ENCODE measurements at regions of chr11 and their contacts with region 1.

Region 1: GRCh38 chr11:124800226-124800929 is at the start of gene MSANTD2:
- DNase-seq: peak; percentile 84 to 92
- H3K4me3 ChIP-seq: peak within 1 kb of the TSS; percentile 96
- H3K4me3 Mint-ChIP-seq: peak within 1 kb of the TSS; percentile 81
- H3K27ac Mint-ChIP-seq: peak within 1 kb of the TSS; percentile 65
- H3K4me1 ChIP-seq: peaks cover 17% of the 10 kb centered on the region
- H3K4me1 Mint-ChIP-seq: peaks cover 25% of the 10 kb centered on the region
- H3K27me3 ChIP-seq: no peaks in the 10 kb centered on the region
- H3K27me3 Mint-ChIP-seq: no peaks in the 10 kb centered on the region
- CTCF ChIP-seq: no peak
- total RNA-seq, gene MSANTD2: 28.3 and 33.2 TPM in 2 replicates

Region 2: GRCh38 chr11:124622531-124623451 is 177.6 kb before region 1 on chr11 and contains the start of gene TBRG1:
- CTCF ChIA-PET with region 1: no interaction called
- POLR2A ChIA-PET with region 1: interaction called, 5 read pairs
- intact Hi-C with region 1: loop called (anchors 1 kb)
- DNase-seq: peak; percentile 93 to 94
- H3K4me3 ChIP-seq: peak within 1 kb of the TSS; percentile 80
- H3K4me3 Mint-ChIP-seq: peak within 1 kb of the TSS; percentile 99
- H3K27ac Mint-ChIP-seq: peak within 1 kb of the TSS; percentile 98
- H3K4me1 ChIP-seq: peaks cover 27% of the 10 kb centered on the region
- H3K4me1 Mint-ChIP-seq: peaks cover 39% of the 10 kb centered on the region
- H3K27me3 ChIP-seq: no peaks in the 10 kb centered on the region
- H3K27me3 Mint-ChIP-seq: no peaks in the 10 kb centered on the region
- CTCF ChIP-seq: no peak
- total RNA-seq, gene TBRG1: 71.5 and 72.0 TPM in 2 replicates

Region 3: GRCh38 chr11:124739479-124740276 is 60.7 kb before region 1 on chr11 and contains the start of gene NRGN:
- CTCF ChIA-PET with region 1: no interaction called
- POLR2A ChIA-PET with region 1: no interaction called
- intact Hi-C with region 1: no loop called
- DNase-seq: peak; percentile 96 to 98
- H3K4me3 ChIP-seq: peak within 1 kb of the TSS; percentile 62
- H3K4me3 Mint-ChIP-seq: peak within 1 kb of the TSS; percentile 65
- H3K27ac Mint-ChIP-seq: no peak within 1 kb of the TSS
- H3K4me1 ChIP-seq: peaks cover 6% of the 10 kb centered on the region
- H3K4me1 Mint-ChIP-seq: peaks cover 6% of the 10 kb centered on the region
- H3K27me3 ChIP-seq: peaks cover 8% of the 10 kb centered on the region
- H3K27me3 Mint-ChIP-seq: peaks cover 40% of the 10 kb centered on the region
- CTCF ChIP-seq: no peak
- total RNA-seq, gene NRGN: 5.7 and 7.8 TPM in 2 replicates

Region 4: DNA sequence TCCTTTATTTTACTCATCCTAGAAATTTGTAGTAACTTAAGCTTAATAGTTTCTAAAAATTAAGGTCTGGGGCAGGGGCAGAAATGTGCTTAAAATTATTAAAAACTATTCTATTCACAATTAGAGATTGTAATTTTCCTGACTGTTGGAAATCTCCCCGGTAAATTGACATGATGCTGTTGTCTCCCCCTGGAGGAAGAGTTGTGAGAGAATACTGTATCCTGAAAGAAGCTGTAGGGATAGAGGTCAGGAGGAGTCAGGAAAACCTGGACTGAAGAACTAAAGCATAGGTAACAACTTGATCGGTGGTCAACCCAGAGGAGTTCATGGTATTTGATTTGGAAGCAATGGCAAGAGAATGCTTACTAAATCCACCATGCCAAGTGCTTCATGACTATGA is 22.1 kb before region 1 on chr11:
- CTCF ChIA-PET with region 1: interaction called, 10 read pairs
- POLR2A ChIA-PET with region 1: no interaction called
- intact Hi-C with region 1: no loop called
- DNase-seq: peak in 1 of 2 experiments; percentile 42
- H3K4me3 ChIP-seq: no peak overlapping the region
- H3K4me3 Mint-ChIP-seq: no peak overlapping the region
- H3K27ac Mint-ChIP-seq: no peak overlapping the region
- H3K4me1 ChIP-seq: no peaks in the 10 kb centered on the region
- H3K4me1 Mint-ChIP-seq: peaks cover 7% of the 10 kb centered on the region
- H3K27me3 ChIP-seq: no peaks in the 10 kb centered on the region
- H3K27me3 Mint-ChIP-seq: no peaks in the 10 kb centered on the region
- CTCF ChIP-seq: peak; percentile 62 to 70

Region 5: GRCh38 chr11:124823504-124824372 is 23.4 kb after region 1 on chr11:
- CTCF ChIA-PET with region 1: no interaction called
- POLR2A ChIA-PET with region 1: interaction called, 3 read pairs
- intact Hi-C with region 1: loop called (anchors 1 kb)
- DNase-seq: peak; percentile 50 to 60
- H3K4me3 ChIP-seq: no peak overlapping the region
- H3K4me3 Mint-ChIP-seq: peak overlapping the region; percentile 15
- H3K27ac Mint-ChIP-seq: peak overlapping the region; percentile 23
- H3K4me1 ChIP-seq: peaks cover 18% of the 10 kb centered on the region
- H3K4me1 Mint-ChIP-seq: peaks cover 21% of the 10 kb centered on the region
- H3K27me3 ChIP-seq: no peaks in the 10 kb centered on the region
- H3K27me3 Mint-ChIP-seq: no peaks in the 10 kb centered on the region
- CTCF ChIP-seq: no peak